Heart left ventricle (tissue), 16 donors: ENCODE measurements at regions of chr10 and their contacts with region 1.

Region 1: DNA sequence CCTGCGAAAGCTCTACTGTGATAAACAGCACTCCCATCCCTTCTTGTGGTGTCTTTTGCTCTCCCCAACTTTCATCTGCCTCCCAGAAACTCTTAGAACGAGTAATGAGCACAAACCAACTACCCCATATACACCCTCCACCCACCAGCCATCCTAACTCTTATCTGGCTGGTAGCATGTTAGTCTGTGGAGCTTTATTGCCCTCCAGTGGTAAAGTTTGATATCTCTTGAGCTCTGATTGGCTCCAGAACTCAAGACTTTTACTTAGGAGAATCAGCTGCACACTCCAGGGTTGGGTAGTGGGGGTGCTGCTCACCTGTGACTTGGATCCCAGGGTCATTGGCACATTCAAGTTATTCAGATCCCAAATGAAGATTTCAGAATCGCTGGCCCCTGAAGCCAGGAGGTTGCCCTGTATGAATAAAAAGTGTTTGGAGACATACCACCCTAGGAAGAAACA is 10.9 kb downstream of the SEC31B start:
- DNase-seq: no peak
- ATAC-seq: peak in 2 of 4 donors; percentile 26 to 44
- H3K4me3 ChIP-seq: no peak overlapping the region
- H3K27ac ChIP-seq: no peak overlapping the region
- H3K4me1 ChIP-seq: peaks cover 0 to 22% (median 0%) of the 10 kb centered on the region in 12 donors
- H3K27me3 ChIP-seq: no peaks in the 10 kb centered on the region
- CTCF ChIP-seq: peak in 6 of 12 donors; percentile 17 to 39 (median 22)
- POLR2A ChIP-seq: no peak

Region 2: DNA sequence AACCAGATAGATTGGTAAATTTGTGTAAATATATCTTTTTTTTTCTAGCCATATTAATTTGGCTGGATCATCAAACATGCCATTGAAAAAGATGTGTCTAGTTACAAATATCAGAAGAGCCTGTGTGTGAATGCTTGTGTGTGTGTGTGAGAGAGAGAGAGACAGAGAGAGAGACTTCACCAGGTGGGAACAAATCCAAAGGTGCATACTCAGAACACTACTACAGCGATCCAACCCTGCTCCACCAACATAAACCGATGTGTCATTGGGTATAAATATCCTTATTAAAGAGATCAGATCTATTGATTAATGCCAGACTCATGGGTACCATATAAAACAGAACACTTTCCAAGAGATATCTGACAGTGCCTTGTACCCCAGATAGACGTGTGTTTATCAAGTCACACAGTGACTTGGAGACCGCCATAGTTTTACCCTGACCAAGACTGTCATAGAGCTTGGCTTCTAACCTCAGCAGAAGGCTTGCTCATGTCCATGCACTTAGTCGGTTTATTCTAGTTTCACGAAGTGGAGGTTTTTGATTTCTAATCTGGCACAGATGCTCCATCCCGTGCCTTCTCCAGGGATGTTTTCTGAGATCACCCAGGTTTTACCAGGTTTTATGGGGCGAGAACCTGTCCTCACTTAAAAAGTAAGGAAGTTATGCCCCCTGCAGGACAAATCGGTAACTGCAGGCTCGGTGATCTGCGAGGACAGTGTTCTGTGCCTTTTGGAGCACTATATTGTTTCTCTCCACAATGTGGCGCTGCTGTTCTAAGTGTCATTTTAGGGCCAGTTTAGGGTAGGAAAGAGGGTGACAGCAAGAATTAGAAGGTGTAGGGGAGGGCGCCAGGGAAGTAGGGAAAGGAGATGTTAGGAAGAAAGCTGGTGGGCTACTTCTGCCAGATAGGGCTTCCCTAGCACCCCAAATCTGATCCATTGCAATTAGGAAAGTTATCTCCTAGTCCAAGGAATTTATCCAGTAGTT is 75.2 kb before region 1 on chr10:
- intact Hi-C with region 1: loop called in 4 of 10 experiments (anchors 5 to 10 kb)
- DNase-seq: peak; percentile 83 to 89 (median 88)
- ATAC-seq: peak; percentile 58 to 92 (median 91)
- H3K4me3 ChIP-seq: no peak overlapping the region
- H3K27ac ChIP-seq: no peak overlapping the region
- H3K4me1 ChIP-seq: no peaks in the 10 kb centered on the region
- H3K27me3 ChIP-seq: no peaks in the 10 kb centered on the region
- CTCF ChIP-seq: peak; percentile 95 to 100 (median 99)
- POLR2A ChIP-seq: no peak